Activated naive CD4-positive, alpha-beta T cell treated with anti-CD3 and anti-CD28 coated beads for 36 hours (primary cell): ENCODE measurements at regions of chr2 and their contacts with region 1.

Region 1: DNA sequence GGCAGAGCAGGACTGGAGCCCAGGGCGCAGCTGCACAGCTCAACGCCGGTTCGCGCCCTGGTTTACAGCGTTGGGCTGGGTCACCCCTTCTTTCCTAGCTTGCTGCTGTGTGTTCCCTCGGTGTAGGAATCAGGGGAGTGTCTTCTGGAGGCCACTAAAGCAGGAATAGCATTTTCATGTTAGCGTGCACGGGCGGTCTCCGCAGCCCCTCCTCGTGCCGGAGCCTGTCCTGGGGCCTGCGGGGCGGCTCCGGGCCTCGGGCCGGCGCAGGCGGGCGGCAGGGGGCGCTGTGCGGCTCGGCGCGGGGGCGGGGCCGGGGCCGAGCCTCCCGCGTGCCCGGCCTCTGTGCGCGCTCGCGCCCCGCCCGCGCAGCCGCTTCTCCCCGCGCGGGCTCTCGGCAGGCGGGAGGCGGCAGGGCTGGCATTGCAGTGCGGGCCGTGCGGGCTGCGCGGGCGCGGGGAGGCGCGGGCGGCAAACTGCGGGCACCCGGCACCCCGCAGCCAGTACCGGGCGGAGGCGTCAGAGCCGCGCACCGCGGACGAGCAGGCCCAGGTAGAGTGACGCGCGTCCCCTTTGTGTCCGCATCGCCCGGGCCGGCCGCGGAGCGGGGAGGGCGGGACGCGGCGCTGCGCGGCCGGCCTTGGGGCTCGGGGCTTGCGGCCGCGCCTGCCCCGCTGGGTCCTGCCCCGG is at the start of gene RNF144A:
- DNase-seq: peak; percentile 67
- H3K4me3 Mint-ChIP-seq: peak within 1 kb of the TSS; percentile 76
- H3K27ac Mint-ChIP-seq: peak within 1 kb of the TSS; percentile 85
- H3K4me1 Mint-ChIP-seq: peaks cover 75% of the 10 kb centered on the region
- H3K27me3 Mint-ChIP-seq: no peaks in the 10 kb centered on the region
- total RNA-seq, gene RNF144A: 49.0 to 50.6 TPM

Region 2: GRCh38 chr2:6877402-6878304 is 39.6 kb before region 1 on chr2 and contains the start of gene RSAD2:
- CTCF ChIA-PET with region 1: interaction called, 10 read pairs
- intact Hi-C with region 1: loop called (anchors 1 kb)
- DNase-seq: peak; percentile 45
- H3K4me3 Mint-ChIP-seq: peak within 1 kb of the TSS; percentile 68
- H3K27ac Mint-ChIP-seq: no peak within 1 kb of the TSS
- H3K4me1 Mint-ChIP-seq: peaks cover 66% of the 10 kb centered on the region
- H3K27me3 Mint-ChIP-seq: no peaks in the 10 kb centered on the region
- total RNA-seq, gene RSAD2: 9.1 to 9.9 TPM

Region 3: DNA sequence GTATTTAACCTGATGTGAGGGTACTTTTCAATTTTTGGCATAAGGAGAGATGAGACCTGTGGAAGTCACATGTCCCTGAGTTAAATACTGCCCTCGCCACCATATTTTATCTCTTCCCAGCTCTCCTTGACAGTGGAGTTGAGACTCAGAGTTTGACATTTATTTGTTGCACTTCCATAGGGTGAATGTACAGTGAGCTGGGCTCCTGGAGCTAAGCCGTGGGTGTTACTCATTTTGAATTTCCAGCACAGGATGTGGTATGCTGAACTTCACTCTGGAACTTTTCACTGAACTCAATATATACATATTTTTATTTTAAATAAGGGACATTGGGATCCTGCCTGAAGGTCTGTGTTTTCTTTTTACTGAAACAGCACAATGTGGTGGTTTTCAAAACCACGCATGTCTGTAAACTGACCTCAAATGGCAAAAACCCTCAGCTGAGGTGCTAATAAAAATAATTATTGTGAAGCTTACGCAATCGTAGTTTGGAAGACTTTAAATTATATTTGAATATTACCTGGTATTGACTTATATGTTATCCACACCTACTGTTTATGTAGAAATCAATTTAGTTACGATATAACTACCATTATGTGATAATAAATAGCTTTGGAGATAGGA is 12.1 kb after region 1 on chr2:
- CTCF ChIA-PET with region 1: interaction called, 10 read pairs
- intact Hi-C with region 1: no loop called
- DNase-seq: no peak
- H3K4me3 Mint-ChIP-seq: no peak overlapping the region
- H3K27ac Mint-ChIP-seq: no peak overlapping the region
- H3K4me1 Mint-ChIP-seq: peaks cover 68% of the 10 kb centered on the region
- H3K27me3 Mint-ChIP-seq: no peaks in the 10 kb centered on the region

Region 4: DNA sequence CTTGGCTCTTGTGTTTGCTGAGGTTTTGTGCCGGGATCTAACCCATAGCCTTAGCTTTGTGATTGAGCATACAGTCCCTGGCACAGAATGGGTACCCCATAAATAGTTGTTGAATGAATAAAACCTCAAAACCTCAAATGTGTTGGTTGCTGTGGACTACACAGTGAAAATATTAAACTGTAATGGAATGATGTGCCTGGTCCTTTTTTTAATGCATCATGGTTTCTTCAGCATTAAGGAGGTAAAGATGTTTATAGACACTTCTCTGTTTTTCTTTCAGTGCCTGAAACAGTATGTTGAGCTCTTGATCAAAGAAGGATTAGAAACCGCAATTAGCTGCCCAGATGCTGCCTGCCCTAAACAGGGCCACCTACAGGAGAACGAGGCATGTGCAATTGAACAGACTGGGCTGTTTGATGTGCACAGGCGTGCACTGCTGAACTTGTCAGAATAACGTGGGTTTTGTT is 97.0 kb after region 1 on chr2:
- CTCF ChIA-PET with region 1: interaction called, 6 read pairs
- intact Hi-C with region 1: loop called (anchors 2 kb)
- DNase-seq: peak; percentile 42
- H3K4me3 Mint-ChIP-seq: no peak overlapping the region
- H3K27ac Mint-ChIP-seq: peak overlapping the region; percentile 44
- H3K4me1 Mint-ChIP-seq: peaks cover 41% of the 10 kb centered on the region
- H3K27me3 Mint-ChIP-seq: no peaks in the 10 kb centered on the region

Region 5: GRCh38 chr2:7405861-7406715 is 488.9 kb after region 1 on chr2:
- CTCF ChIA-PET with region 1: no interaction called
- intact Hi-C with region 1: no loop called
- DNase-seq: no peak
- H3K4me3 Mint-ChIP-seq: no peak overlapping the region
- H3K27ac Mint-ChIP-seq: no peak overlapping the region
- H3K4me1 Mint-ChIP-seq: peaks cover 12% of the 10 kb centered on the region
- H3K27me3 Mint-ChIP-seq: peaks cover 12% of the 10 kb centered on the region